ENCODE measurements at regions of chr19 and their contacts with region 1.

Region 1: GRCh38 chr19:54325194-54325621 is 12.2 kb upstream of the LILRA5 start:
- DNase-seq: peak in 1 of 2 experiments; percentile 52
- H3K4me3 ChIP-seq: no peak overlapping the region
- H3K4me3 Mint-ChIP-seq: no peak overlapping the region
- H3K27ac Mint-ChIP-seq: no peak overlapping the region
- H3K4me1 ChIP-seq: no peaks in the 10 kb centered on the region
- H3K4me1 Mint-ChIP-seq: no peaks in the 10 kb centered on the region
- H3K27me3 ChIP-seq: no peaks in the 10 kb centered on the region
- H3K27me3 Mint-ChIP-seq: peaks cover 12% of the 10 kb centered on the region
- CTCF ChIP-seq: peak; percentile 59 to 80

Region 2: DNA sequence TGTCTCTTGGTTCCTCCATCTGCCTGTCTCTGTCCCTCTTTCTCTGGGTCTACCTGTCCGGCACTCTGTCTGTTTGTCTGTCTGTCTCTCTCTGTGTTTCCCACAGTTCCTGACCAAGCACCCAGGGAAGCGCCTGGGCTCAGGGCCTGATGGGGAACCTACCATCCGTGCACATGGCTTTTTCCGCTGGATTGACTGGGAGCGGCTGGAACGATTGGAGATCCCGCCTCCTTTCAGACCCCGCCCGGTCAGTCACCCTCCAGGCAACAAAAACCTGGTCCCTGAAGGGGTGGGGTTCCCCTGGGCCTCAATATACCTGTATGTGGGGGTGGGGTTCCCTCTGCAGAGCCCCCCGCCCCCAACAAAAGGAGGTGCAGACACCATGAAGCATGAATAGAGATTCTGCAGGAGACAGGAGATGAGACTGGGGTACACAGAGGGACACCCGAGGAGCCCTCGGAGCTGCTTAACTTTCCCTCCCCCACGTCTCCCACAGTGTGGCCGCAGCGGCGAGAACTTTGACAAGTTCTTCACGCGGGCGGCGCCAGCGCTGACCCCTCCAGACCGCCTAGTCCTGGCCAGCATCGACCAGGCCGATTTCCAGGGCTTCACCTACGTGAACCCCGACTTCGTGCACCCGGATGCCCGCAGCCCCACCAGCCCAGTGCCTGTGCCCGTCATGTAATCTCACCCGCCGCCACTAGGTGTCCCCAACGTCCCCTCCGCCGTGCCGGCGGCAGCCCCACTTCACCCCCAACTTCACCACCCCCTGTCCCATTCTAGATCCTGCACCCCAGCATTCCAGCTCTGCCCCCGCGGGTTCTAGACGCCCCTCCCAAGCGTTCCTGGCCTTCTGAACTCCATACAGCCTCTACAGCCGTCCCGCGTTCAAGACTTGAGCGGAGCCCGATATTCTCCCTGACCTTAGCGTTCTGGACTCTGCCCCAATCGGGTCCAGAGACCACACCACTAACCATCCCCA is 418.7 kb before region 1 on chr19:
- CTCF ChIA-PET with region 1: no interaction called
- POLR2A ChIA-PET with region 1: no interaction called
- intact Hi-C with region 1: no loop called
- DNase-seq: peak in 1 of 2 experiments; percentile 32
- H3K4me3 ChIP-seq: no peak overlapping the region
- H3K4me3 Mint-ChIP-seq: no peak overlapping the region
- H3K27ac Mint-ChIP-seq: no peak overlapping the region
- H3K4me1 ChIP-seq: no peaks in the 10 kb centered on the region
- H3K4me1 Mint-ChIP-seq: no peaks in the 10 kb centered on the region
- H3K27me3 ChIP-seq: no peaks in the 10 kb centered on the region
- H3K27me3 Mint-ChIP-seq: peaks cover 28% of the 10 kb centered on the region
- CTCF ChIP-seq: peak in 1 of 2 experiments; percentile 38

Region 3: DNA sequence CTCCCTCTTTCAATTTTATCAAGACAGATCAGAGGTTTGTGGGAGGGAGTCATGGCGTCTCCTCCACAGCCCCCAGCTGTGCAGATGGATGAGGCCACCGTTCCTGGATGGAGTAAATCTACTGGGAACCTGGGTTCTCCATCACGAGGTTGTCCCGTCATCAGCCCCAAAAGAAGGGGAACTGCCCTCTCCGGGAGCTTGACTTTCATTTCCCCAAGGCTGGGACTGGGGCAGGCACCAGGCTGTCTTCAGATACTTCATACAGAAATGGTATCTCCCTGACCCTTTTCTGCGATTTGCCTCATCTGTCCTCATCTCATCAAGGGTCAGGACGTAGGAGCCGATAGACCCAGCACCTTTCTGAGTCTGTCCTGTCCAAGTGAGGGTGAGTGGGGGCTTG is 54.1 kb before region 1 on chr19:
- CTCF ChIA-PET with region 1: no interaction called
- POLR2A ChIA-PET with region 1: no interaction called
- intact Hi-C with region 1: no loop called
- DNase-seq: no peak
- H3K4me3 ChIP-seq: no peak overlapping the region
- H3K4me3 Mint-ChIP-seq: no peak overlapping the region
- H3K27ac Mint-ChIP-seq: no peak overlapping the region
- H3K4me1 ChIP-seq: no peaks in the 10 kb centered on the region
- H3K4me1 Mint-ChIP-seq: no peaks in the 10 kb centered on the region
- H3K27me3 ChIP-seq: no peaks in the 10 kb centered on the region; the same call in 1 of the 2 replicates
- H3K27me3 Mint-ChIP-seq: peaks cover 30% of the 10 kb centered on the region
- CTCF ChIP-seq: no peak

Region 4: GRCh38 chr19:54281007-54281728 is 44.0 kb before region 1 on chr19 and contains the start of gene LILRB2:
- CTCF ChIA-PET with region 1: interaction called, 12 read pairs
- POLR2A ChIA-PET with region 1: no interaction called
- intact Hi-C with region 1: no loop called
- DNase-seq: no peak
- H3K4me3 ChIP-seq: no peak within 1 kb of the TSS
- H3K4me3 Mint-ChIP-seq: no peak within 1 kb of the TSS
- H3K27ac Mint-ChIP-seq: no peak within 1 kb of the TSS
- H3K4me1 ChIP-seq: no peaks in the 10 kb centered on the region
- H3K4me1 Mint-ChIP-seq: no peaks in the 10 kb centered on the region
- H3K27me3 ChIP-seq: no peaks in the 10 kb centered on the region; the same call in 1 of the 2 replicates
- H3K27me3 Mint-ChIP-seq: peaks cover 48% of the 10 kb centered on the region
- CTCF ChIP-seq: no peak
- total RNA-seq, gene LILRB2: not detected in 2 replicates

Region 5: DNA sequence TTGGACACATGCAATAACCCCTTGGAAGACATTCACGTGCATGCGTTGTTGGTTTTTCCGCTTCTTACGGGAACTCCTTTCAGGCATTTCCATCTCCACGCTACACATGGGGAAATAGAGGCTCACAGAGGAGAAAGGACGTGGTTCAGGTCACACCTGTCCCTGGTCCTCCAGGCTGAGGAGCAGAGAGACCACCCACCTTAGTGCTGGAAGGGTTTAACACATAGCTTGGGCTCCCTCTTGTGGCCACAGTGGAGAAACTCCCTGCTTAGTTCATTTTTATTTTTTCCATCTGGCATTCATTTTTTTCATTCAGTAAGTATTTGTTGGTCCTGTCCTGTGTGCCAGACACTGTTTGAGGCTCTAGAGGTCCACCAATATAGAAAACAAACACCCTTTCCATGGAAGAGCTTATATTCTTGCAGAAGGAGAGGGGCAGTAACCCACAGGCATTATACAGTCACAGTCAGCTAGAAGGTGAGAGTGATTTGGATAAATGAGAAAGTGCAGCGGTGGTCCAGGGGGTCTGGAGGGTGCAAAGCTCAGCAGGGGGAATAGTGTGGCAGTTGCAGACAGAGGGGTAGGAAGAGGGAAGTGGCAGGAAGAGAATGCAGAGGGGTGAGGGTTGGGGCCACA is 65.9 kb after region 1 on chr19:
- CTCF ChIA-PET with region 1: no interaction called
- POLR2A ChIA-PET with region 1: no interaction called
- intact Hi-C with region 1: loop called (anchors 1 kb)
- DNase-seq: peak; percentile 65 to 70
- H3K4me3 ChIP-seq: no peak overlapping the region
- H3K4me3 Mint-ChIP-seq: no peak overlapping the region
- H3K27ac Mint-ChIP-seq: no peak overlapping the region
- H3K4me1 ChIP-seq: peaks cover 4% of the 10 kb centered on the region; the same call in 1 of the 2 replicates
- H3K4me1 Mint-ChIP-seq: peaks cover 7% of the 10 kb centered on the region
- H3K27me3 ChIP-seq: 0 out of 2 replicates have a peak, but pooled peaks cover 2% of the 10 kb centered on the region
- H3K27me3 Mint-ChIP-seq: peaks cover 21% of the 10 kb centered on the region
- CTCF ChIP-seq: peak; percentile 85 to 93

Region 6: DNA sequence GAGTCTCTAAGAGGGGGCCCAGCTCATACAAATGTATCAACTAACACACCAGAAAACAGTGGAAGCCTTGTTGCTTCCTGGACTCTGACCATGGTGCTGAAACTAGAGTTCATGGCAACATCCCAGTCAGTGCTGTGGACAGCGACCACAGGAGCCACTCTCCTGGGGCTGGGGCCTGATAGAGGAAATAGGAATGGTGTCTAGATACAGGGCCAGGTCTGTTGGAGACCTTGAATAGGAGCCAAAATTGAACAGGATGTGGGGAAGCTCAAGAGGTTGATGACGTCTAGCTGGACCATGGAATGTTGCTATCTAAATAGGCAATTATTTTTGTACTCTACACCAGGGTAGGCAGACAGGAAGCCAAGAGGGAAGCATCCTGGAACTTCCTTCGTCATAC is 359.3 kb after region 1 on chr19:
- CTCF ChIA-PET with region 1: no interaction called
- POLR2A ChIA-PET with region 1: no interaction called
- intact Hi-C with region 1: no loop called
- DNase-seq: peak in 1 of 2 experiments; percentile 65
- H3K4me3 ChIP-seq: no peak overlapping the region
- H3K4me3 Mint-ChIP-seq: no peak overlapping the region
- H3K27ac Mint-ChIP-seq: no peak overlapping the region
- H3K4me1 ChIP-seq: no peaks in the 10 kb centered on the region
- H3K4me1 Mint-ChIP-seq: no peaks in the 10 kb centered on the region
- H3K27me3 ChIP-seq: no peaks in the 10 kb centered on the region
- H3K27me3 Mint-ChIP-seq: peaks cover 7% of the 10 kb centered on the region
- CTCF ChIP-seq: no peak